ENCODE measurements at regions of chr1 and their contacts with region 1.

Region 1: DNA sequence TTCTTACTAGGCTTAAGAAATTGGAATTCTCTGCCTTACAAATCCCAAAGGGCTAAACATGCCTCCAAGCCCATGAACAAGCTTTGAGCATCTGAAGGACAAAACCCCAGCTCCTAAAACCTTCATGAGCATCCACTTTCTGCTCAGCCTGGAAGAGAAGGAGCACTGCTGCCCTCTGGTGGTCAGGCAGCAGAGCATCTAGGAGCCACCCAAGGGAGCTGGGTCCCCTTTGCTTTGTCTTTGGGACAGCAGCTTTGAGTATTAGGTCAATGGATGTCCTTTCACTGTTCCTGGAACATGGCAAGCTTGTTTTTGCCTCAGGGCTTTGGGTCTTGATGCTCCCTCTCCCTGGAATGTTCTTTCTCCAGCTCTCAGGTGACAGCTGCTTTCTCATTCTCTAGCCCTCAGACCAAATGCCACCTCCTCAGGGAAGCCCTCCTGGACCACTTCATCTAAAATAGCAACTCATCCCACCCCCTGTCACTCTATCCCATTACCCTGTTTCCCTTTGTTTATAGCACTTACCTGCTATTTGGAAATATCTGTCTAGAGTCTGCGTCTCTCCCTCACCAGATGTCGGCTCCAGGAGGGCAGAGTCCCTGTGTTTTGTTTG is 25.7 kb downstream of the RAB7B start:
- DNase-seq: peak; percentile 87

Region 2: GRCh38 chr1:205658943-205659581 is 318.4 kb before region 1 on chr1:
- CTCF ChIA-PET with region 1: interaction called, 23 read pairs
- POLR2A ChIA-PET with region 1: no interaction called
- DNase-seq: peak; percentile 92

Region 3: DNA sequence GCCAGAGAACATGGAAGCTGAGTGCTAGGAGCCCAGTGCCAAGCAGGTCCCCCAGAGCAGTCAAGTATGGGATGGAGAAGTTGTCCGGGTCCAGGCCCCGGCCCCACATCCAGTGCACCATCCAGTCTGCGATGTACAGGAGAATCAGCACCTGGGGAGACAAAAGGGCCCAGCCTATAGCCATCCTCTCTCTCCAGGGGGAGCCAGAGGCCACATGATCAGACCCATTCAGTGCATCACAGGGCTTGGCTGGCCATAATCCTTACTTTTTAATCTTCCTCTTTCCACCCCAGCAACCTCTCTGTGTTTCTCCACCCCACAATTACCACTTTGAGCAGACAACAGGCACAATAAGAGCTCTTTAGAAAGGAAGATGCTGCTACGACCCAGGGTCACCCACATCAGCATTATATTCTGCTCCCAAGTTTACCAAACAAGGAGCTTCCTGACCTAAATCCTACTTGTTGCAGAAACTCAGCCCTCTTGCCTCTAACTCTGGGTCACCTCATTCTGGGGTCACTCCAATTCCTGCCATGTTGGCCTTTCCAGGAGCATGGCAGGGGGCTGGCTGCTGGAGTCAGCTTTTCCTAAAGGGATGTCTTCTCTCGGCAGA is 185.8 kb before region 1 on chr1:
- CTCF ChIA-PET with region 1: interaction called, 51 read pairs
- POLR2A ChIA-PET with region 1: interaction called, 5 read pairs
- DNase-seq: peak; percentile 76

Region 4: GRCh38 chr1:205919026-205919746 is 58.3 kb before region 1 on chr1:
- CTCF ChIA-PET with region 1: interaction called, 197 read pairs
- POLR2A ChIA-PET with region 1: interaction called, 10 read pairs
- DNase-seq: peak; percentile 89

Region 5: DNA sequence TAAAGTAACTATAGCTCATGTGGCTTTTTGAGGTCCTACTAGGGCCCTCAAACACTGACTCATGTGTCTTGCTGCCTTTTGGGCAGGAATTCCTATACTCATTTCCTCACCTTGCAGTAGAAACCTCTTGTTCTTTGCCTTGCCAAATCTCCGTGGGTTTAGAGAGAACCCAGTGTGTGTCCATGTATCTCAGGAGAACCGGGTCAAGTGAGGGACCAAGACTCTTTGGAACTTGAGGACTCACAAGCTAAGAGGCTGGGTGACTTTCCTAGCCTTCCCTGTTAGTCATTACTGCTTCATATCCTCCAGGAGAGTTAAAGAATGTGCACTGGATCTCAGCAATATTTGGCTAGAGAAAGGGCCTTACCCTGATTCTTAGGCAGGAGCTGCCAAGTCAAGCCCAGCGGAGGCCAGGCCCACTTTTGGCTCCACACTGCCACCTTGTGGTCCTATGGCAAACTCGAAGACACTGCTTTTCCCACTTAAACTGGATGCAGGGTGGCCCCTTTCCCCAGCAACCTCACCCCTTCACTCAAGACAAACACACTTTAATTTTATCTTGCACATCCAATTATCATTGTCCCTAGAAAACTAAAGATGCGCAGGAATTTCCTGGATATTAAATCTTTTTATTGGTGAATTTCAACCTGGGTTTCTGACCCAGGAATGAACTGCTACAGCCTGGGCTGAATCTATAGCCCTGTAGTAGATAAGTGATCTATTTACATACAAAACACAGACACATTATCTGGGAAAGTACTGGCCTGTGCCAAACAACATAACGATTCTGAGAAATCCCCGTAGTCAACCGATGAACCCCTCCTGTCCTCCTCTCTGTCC is 129.0 kb after region 1 on chr1:
- CTCF ChIA-PET with region 1: interaction called, 10 read pairs
- POLR2A ChIA-PET with region 1: no interaction called
- DNase-seq: peak; percentile 92

Measured in HEK293T (cell line).